Activated CD8-positive, alpha-beta memory T cell treated with anti-CD3 and anti-CD28 coated beads, Interleukin-2, amount 10 ng/mL, durations not matched to agents 7 days and 5 days (primary cell): ENCODE measurements at regions of chr7 and their contacts with region 1.

Region 1: GRCh38 chr7:143735962-143736361 is 21.5 kb downstream of the CTAGE6 start:
- DNase-seq: no peak
- ATAC-seq: no peak
- H3K4me3 Mint-ChIP-seq: no peak overlapping the region
- H3K27ac Mint-ChIP-seq: no peak overlapping the region
- H3K4me1 Mint-ChIP-seq: peaks cover 11% of the 10 kb centered on the region
- H3K27me3 Mint-ChIP-seq: no peaks in the 10 kb centered on the region

Region 2: GRCh38 chr7:143172354-143172753 is 563.6 kb before region 1 on chr7:
- CTCF ChIA-PET with region 1: no interaction called
- DNase-seq: no peak
- ATAC-seq: no peak
- H3K4me3 Mint-ChIP-seq: no peak overlapping the region
- H3K27ac Mint-ChIP-seq: no peak overlapping the region
- H3K4me1 Mint-ChIP-seq: no peaks in the 10 kb centered on the region
- H3K27me3 Mint-ChIP-seq: peaks cover 2% of the 10 kb centered on the region

Region 3: GRCh38 chr7:144011458-144012230 is 275.7 kb after region 1 on chr7:
- CTCF ChIA-PET with region 1: no interaction called
- DNase-seq: no peak
- ATAC-seq: no peak
- H3K4me3 Mint-ChIP-seq: no peak overlapping the region
- H3K27ac Mint-ChIP-seq: no peak overlapping the region
- H3K4me1 Mint-ChIP-seq: no peaks in the 10 kb centered on the region
- H3K27me3 Mint-ChIP-seq: peaks cover 12% of the 10 kb centered on the region

Region 4: GRCh38 chr7:144127703-144128334 is 391.9 kb after region 1 on chr7:
- CTCF ChIA-PET with region 1: interaction called, 15 read pairs
- DNase-seq: peak; percentile 91
- ATAC-seq: peak; percentile 99
- H3K4me3 Mint-ChIP-seq: no peak overlapping the region
- H3K27ac Mint-ChIP-seq: no peak overlapping the region
- H3K4me1 Mint-ChIP-seq: peaks cover 2% of the 10 kb centered on the region
- H3K27me3 Mint-ChIP-seq: peaks cover 3% of the 10 kb centered on the region